Naive thymus-derived CD4-positive, alpha-beta T cell (primary cell): ENCODE measurements at regions of chr12 and their contacts with region 1.

Region 1: DNA sequence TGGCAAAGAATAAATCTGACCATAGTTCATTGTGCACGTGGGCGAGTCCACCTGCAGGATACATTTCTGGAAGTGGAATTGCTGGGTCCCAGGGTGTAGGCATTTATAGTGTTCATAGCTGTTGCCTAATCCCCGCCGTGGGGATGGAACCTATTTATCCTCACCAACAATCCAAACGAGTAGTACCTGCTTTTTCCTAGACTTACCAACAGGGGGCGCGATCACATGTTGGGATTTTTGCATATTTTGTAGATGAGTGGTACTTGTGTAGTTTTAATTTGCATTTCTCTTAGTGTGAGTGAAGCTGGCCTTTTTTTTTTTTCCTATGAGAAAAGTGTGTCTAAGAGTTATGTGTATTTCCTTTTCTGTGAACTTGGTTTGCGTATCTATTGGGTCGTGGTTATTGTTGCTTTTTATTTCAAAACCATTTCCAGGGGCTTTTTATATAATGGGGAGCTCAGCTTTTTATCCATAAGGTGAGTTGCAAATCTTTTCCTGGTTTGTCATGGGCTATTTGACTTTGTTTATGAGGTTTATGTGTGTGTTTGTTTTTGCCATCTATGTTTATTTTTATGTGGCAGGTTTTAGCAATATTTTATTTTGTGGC is 67.2 kb downstream of the CCDC92 start:
- DNase-seq: peak; percentile 38 to 78 (median 66)
- ATAC-seq: peak; percentile 76
- H3K4me3 ChIP-seq: no peak overlapping the region
- H3K4me3 Mint-ChIP-seq: no peak overlapping the region
- H3K27ac ChIP-seq: no peak overlapping the region
- H3K27ac Mint-ChIP-seq: peak overlapping the region in 1 of 9 donors; percentile 42
- H3K4me1 ChIP-seq: no peaks in the 10 kb centered on the region
- H3K4me1 Mint-ChIP-seq: peaks cover 7 to 17% (median 15%) of the 10 kb centered on the region in 7 donors
- H3K27me3 ChIP-seq: no peaks in the 10 kb centered on the region
- H3K27me3 Mint-ChIP-seq: peaks cover 0 to 17% (median 3%) of the 10 kb centered on the region in 5 donors

Region 2: DNA sequence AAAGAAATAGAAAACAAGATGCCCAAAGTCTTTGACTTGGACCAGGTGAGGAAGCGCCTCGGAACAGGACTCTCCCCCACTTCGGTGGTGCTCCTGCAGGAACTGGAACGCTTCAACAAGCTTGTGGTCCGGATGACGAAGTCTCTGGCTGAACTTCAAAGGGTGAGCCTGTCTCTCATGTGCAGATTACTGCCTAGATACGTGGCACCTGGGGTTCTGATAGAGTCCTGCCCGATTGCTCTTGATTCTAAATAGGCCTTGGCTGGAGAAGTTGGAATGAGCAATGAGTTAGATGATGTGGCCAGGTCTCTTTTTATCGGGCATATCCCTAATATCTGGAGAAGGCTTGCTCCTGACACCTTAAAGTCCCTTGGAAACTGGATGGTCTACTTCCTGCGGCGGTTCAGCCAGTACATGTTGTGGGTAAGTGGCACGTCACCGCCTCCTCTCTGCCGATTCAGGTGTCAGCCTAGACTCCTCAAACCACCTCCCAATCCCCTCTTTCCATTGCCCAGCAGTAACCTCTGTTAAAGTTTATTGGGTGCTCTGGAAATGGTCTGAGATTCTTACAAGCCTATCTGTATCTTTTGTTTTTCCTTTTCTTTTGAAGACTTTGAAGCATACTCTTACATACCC is 26.4 kb after region 1 on chr12:
- CTCF ChIA-PET with region 1: interaction called, 4 read pairs
- POLR2A ChIA-PET with region 1: interaction called, 3 read pairs
- intact Hi-C with region 1: loop called in 1 of 2 experiments (anchors 1 kb)
- DNase-seq: peak in 7 of 9 donors; percentile 60 to 80 (median 77)
- ATAC-seq: peak; percentile 85
- H3K4me3 ChIP-seq: peak overlapping the region; percentile 31
- H3K4me3 Mint-ChIP-seq: peak overlapping the region; percentile 32 to 83 (median 72)
- H3K27ac ChIP-seq: no peak overlapping the region
- H3K27ac Mint-ChIP-seq: peak overlapping the region in 7 of 9 donors; percentile 27 to 87 (median 73)
- H3K4me1 ChIP-seq: peaks cover 0 to 17% of the 10 kb centered on the region in 2 donors
- H3K4me1 Mint-ChIP-seq: peaks cover 16 to 40% (median 22%) of the 10 kb centered on the region in 7 donors
- H3K27me3 ChIP-seq: no peaks in the 10 kb centered on the region
- H3K27me3 Mint-ChIP-seq: peaks cover 0 to 11% (median 0%) of the 10 kb centered on the region in 5 donors

Region 3: DNA sequence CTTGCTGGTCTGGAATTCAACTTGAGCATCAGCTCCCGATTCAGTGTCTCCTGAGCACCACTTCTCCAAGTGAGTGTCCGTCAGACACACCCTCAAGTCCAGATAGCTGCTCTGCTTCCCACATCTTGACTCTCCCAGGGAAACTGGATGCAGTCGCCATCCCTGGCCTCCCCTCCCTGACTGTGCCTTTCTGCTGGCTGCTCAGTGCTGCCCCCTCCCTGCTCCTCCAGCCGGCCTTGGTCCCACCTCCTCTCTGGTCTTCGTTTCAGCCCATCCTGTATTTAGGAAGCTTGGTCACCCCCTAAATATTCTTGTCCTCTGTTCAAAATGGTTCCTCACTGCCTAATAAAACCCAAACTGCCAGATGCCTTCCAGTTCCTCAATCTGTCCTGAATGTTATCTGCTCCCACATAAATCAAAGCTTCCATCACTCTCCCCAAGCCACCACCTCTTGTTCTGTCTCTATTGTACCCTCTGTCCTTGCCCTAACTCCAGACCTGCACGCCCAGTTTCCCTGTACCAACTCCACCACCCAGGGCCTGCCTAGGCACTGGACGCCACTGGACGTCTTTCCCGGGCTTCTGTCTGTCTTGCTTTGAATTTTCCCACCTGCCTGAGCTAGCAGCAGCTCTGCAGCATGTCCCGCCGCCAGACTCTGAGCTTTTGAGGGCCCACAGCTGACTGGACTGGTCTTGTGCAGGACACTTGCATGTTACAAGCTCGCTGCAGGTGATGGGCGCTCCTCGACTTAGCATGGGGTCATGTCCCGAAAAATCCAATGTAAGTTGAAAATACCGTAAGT is 33.5 kb after region 1 on chr12:
- CTCF ChIA-PET with region 1: interaction called, 6 read pairs
- POLR2A ChIA-PET with region 1: no interaction called
- intact Hi-C with region 1: loop called in 1 of 2 experiments (anchors 1 kb)
- DNase-seq: peak in 1 of 9 donors; percentile 3
- ATAC-seq: no peak
- H3K4me3 ChIP-seq: peak overlapping the region; percentile 13
- H3K4me3 Mint-ChIP-seq: peak overlapping the region; percentile 76 to 90 (median 84)
- H3K27ac ChIP-seq: peak overlapping the region; percentile 68
- H3K27ac Mint-ChIP-seq: peak overlapping the region; percentile 85 to 98 (median 92)
- H3K4me1 ChIP-seq: peaks cover 14 to 18% of the 10 kb centered on the region in 2 donors
- H3K4me1 Mint-ChIP-seq: peaks cover 26 to 38% (median 30%) of the 10 kb centered on the region in 7 donors
- H3K27me3 ChIP-seq: no peaks in the 10 kb centered on the region
- H3K27me3 Mint-ChIP-seq: no peaks in the 10 kb centered on the region